ENCODE measurements at regions of chr6 and their contacts with region 1.

Region 1: DNA sequence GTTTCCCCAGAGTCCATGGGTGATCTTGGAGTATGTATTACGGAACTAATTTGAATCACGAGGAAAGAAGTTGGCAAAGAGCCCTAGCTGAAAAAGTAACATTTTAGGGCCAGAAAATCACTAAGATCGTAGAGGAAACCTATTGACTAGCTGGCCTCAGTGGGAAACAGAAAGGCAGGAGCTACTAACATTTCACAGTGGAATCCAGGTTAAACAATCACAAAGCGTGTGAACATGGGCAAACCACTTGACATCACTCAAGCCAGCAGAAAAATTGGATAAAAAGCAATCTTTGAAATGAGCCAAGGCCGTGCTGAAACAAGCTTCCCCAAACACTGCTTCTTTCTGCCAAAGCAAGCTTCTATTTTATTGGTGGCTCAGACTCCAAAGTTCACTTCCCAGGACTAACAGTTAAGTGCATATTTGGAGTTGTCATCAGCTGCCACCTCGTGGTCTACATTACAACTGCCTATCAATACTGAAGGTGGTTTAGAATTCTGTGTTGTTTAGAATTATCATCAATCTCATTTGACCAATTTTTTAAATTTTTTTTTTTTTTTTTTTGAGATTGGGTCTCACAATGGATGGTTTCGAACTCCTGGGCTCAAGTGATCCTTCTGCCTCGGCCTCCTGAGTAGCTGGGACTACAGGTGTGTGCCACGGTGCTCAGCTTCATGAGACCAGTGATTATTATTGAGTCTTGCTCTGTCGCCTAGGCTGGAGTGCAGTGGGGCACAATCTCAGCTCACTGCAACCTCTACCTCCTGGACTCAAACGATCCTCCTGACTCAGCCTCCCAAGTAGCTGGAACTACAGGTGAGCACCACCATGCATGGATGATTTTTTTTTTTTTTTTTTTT is 10.6 kb downstream of the RPS10 start:
- DNase-seq: peak; percentile 66
- ATAC-seq: peak; percentile 67
- H3K4me3 Mint-ChIP-seq: no peak overlapping the region
- H3K27ac Mint-ChIP-seq: no peak overlapping the region
- H3K4me1 Mint-ChIP-seq: peaks cover 8% of the 10 kb centered on the region
- H3K27me3 Mint-ChIP-seq: no peaks in the 10 kb centered on the region

Region 2: DNA sequence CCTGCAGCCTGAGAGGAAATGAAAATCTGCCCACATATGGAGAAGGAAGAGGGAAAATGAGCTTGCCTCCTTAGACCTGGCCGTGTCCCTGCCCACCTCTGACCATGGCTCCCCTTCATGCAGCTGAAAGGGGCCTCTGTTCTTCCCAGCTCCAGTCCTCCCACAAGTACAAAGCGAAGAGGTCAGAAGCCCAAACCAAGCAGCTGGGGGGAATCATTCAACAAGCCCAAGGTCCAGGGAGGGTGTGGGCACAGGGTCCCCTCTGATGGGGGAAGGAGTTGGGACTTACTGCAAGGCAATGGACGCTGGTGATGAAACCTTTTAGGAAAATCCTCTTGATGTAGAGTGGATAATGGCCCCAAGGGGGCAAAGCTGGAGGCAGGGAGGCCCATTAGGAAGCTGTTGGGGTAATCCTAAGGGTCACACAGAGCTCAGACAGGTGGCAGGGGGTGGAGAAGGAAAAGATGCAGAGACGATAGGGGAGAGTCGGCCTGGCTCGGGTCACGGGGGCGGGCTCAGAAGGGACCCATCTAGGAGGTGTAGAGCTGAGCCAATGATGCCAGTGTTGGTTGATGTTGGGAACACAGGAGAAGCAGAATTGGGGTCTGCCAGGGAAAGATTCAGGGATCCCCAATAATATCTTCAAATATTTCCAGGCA is 253.2 kb before region 1 on chr6:
- CTCF ChIA-PET with region 1: interaction called, 27 read pairs
- POLR2A ChIA-PET with region 1: interaction called, 3 read pairs
- DNase-seq: no peak
- ATAC-seq: no peak
- H3K4me3 Mint-ChIP-seq: no peak overlapping the region
- H3K27ac Mint-ChIP-seq: no peak overlapping the region
- H3K4me1 Mint-ChIP-seq: no peaks in the 10 kb centered on the region
- H3K27me3 Mint-ChIP-seq: peaks cover 24% of the 10 kb centered on the region

Region 3: DNA sequence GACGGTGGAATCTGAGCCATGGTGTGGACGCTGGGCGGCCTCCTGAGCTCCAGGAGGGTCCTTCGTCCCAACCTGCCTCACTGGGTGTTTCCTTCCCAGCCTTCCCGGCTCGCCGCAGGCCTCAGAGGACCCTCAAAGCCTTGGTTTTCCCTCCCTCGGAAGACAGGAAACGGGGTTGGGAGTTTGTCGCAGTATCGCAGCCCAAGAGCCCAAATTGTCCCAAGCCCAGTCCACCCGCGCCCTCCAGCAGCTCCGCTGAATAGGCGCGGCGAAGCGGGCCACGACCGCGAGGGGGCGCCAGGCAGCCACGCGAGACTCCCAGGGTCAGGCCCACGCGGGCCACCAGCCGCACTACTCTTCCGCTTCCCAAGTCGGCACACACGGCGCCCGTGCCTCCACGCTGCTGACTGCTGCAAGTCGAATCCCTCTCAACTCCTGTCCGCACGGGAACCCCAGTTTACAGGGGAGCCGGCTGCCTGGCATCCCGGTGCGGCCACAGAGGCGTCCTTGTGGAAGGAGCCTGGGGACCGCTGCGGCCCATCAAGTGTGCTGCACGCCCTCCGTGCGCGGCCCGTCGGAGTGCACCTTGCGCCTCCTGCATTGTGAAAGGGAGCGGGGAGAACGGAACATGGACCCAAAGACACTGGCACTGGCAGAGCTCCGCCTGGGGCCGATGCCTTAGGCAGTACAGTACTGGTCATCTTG is 219.0 kb before region 1 on chr6:
- CTCF ChIA-PET with region 1: interaction called, 51 read pairs
- POLR2A ChIA-PET with region 1: interaction called, 8 read pairs
- DNase-seq: peak; percentile 89
- ATAC-seq: peak; percentile 99
- H3K4me3 Mint-ChIP-seq: peak overlapping the region; percentile 75
- H3K27ac Mint-ChIP-seq: peak overlapping the region; percentile 39
- H3K4me1 Mint-ChIP-seq: peaks cover 7% of the 10 kb centered on the region
- H3K27me3 Mint-ChIP-seq: peaks cover 13% of the 10 kb centered on the region

Region 4: DNA sequence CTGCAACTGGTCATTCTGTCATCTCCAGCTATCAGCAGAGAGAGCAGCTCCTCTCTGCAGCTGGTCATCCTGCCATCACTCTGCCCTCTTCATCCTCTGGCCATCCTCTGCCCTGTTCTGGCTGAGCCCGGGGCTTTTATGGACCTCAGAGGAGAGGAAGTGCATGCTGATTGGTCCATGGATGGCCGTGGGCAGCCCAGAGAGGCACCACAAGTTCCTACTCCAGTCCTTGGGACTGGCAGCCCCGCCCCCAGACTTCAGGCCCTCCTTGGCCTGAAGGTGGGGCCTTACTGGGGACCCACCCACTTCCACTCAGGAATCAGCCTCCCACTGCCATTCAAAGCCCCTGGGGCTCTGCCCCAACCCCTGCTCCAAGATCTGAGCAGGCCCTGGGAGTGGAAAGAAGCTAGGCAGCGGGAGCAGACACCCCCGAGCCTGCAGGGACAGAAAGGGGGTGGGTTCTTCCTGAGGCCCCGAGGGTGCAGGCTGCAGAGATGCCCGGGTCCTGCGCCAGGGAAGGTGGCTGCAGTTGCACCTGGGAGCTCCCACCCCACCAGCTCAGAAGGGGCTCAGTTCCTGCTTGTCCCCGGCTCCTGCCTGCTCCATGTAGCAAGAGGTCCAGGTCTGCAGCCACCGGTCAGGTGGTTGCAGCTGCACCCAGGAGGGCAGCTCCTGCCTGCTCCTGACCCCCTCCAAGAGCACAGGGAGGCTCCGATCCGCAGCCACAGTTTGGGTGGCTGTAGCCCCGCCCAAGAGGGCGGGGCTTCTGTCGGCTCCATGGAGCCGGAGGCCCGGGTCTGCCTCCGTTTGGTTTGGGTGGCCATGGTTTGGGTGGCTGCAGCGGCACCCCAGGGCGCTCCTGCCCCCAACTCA is 212.7 kb before region 1 on chr6:
- CTCF ChIA-PET with region 1: interaction called, 12 read pairs
- POLR2A ChIA-PET with region 1: no interaction called
- DNase-seq: no peak
- ATAC-seq: no peak
- H3K4me3 Mint-ChIP-seq: no peak overlapping the region
- H3K27ac Mint-ChIP-seq: no peak overlapping the region
- H3K4me1 Mint-ChIP-seq: peaks cover 18% of the 10 kb centered on the region
- H3K27me3 Mint-ChIP-seq: peaks cover 7% of the 10 kb centered on the region

Region 5: GRCh38 chr6:34281702-34282334 is 133.4 kb before region 1 on chr6:
- CTCF ChIA-PET with region 1: no interaction called
- POLR2A ChIA-PET with region 1: no interaction called
- DNase-seq: no peak
- ATAC-seq: no peak
- H3K4me3 Mint-ChIP-seq: no peak overlapping the region
- H3K27ac Mint-ChIP-seq: no peak overlapping the region
- H3K4me1 Mint-ChIP-seq: peaks cover 11% of the 10 kb centered on the region
- H3K27me3 Mint-ChIP-seq: no peaks in the 10 kb centered on the region

Region 6: GRCh38 chr6:34392497-34393190 is 22.6 kb before region 1 on chr6 and contains the start of gene NUDT3:
- CTCF ChIA-PET with region 1: interaction called, 23 read pairs
- POLR2A ChIA-PET with region 1: interaction called, 3 read pairs
- DNase-seq: peak; percentile 96
- ATAC-seq: peak; percentile 96
- H3K4me3 Mint-ChIP-seq: peak within 1 kb of the TSS; percentile 58
- H3K27ac Mint-ChIP-seq: peak within 1 kb of the TSS; percentile 89
- H3K4me1 Mint-ChIP-seq: peaks cover 12% of the 10 kb centered on the region
- H3K27me3 Mint-ChIP-seq: no peaks in the 10 kb centered on the region
- total RNA-seq, gene NUDT3: 13.1 to 13.8 TPM

Region 7: DNA sequence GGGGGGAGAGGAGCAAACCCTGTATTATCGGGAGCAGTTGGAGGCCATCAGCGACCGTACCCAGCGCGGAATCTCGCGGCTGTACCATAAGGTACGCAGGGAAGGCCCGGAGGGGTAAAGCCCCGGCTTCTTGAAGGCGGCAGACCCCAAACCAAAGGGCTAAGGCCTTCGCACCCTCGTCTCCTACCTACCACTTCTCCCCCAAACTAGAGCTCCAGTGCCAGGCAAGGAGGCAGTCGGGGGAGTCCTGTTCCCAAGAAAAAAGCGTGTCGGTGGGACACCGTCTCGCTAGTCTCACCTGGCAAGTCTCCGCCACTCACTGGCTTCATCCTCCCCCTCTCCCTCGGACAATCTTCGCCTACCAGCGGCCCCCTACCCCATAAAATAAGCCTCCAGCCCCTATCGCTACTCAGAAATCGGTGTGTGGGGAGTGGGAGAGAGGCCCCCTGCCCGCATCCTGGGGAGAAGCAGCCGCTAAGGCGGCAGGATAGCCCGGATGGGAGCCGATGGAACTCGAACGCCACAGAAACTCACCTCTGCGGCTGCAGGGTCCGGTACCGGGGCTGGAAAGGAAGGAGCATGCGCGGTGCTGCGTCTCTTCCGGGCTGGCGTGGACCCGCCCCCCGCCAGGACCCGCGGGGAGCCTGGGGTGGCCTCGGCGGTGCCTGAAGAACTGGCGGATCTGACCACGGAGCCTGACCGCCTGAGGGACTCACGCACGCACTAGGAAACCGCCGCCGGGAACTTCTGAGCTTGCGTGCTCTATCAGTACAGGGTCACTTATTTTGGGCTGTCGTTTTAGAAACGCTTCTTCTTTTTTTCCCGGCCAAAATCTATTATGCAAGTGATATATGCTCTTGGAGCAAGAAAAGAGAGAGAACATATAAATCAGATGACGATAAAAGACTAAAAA is 10.5 kb after region 1 on chr6 and contains the start of gene RPS10:
- CTCF ChIA-PET with region 1: interaction called, 26 read pairs
- POLR2A ChIA-PET with region 1: interaction called, 16 read pairs
- DNase-seq: peak; percentile 91
- ATAC-seq: peak; percentile 95
- H3K4me3 Mint-ChIP-seq: peak within 1 kb of the TSS; percentile 99
- H3K27ac Mint-ChIP-seq: peak within 1 kb of the TSS; percentile 98
- H3K4me1 Mint-ChIP-seq: peaks cover 35% of the 10 kb centered on the region
- H3K27me3 Mint-ChIP-seq: peaks cover 8% of the 10 kb centered on the region
- total RNA-seq, gene RPS10: 1,272 to 1,289 TPM

Region 8: GRCh38 chr6:34610819-34611477 is 195.7 kb after region 1 on chr6:
- CTCF ChIA-PET with region 1: interaction called, 10 read pairs
- POLR2A ChIA-PET with region 1: no interaction called
- DNase-seq: no peak
- ATAC-seq: no peak
- H3K4me3 Mint-ChIP-seq: no peak overlapping the region
- H3K27ac Mint-ChIP-seq: no peak overlapping the region
- H3K4me1 Mint-ChIP-seq: peaks cover 14% of the 10 kb centered on the region
- H3K27me3 Mint-ChIP-seq: no peaks in the 10 kb centered on the region

Region 9: GRCh38 chr6:34671801-34672656 is 256.8 kb after region 1 on chr6:
- CTCF ChIA-PET with region 1: no interaction called
- POLR2A ChIA-PET with region 1: no interaction called
- DNase-seq: peak; percentile 87
- ATAC-seq: peak; percentile 99
- H3K4me3 Mint-ChIP-seq: peak overlapping the region; percentile 65
- H3K27ac Mint-ChIP-seq: peak overlapping the region; percentile 96
- H3K4me1 Mint-ChIP-seq: peaks cover 47% of the 10 kb centered on the region
- H3K27me3 Mint-ChIP-seq: no peaks in the 10 kb centered on the region

Region 10: DNA sequence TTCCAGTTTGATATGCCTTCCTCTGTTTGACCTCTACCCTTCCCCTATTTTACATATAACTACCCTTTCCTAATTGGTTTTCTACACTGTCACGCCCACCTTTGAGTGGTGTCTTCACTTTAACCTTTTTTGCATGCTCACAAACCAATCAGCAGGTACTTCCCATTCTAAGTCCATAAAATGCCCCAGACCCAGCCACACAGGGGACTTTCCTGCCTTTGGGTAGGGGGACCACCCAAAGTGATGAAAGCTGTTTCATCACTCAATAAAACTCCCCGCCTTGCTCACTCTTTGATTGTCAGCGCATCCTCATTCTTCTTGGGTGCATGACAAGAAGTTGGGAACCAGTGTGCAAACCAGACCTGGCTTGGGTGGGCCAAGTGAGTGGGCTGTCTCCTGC is 321.6 kb after region 1 on chr6:
- CTCF ChIA-PET with region 1: no interaction called
- POLR2A ChIA-PET with region 1: no interaction called
- DNase-seq: no peak
- ATAC-seq: no peak
- H3K4me3 Mint-ChIP-seq: no peak overlapping the region
- H3K27ac Mint-ChIP-seq: no peak overlapping the region
- H3K4me1 Mint-ChIP-seq: no peaks in the 10 kb centered on the region
- H3K27me3 Mint-ChIP-seq: no peaks in the 10 kb centered on the region

Measured in activated CD8-positive, alpha-beta T cell treated with anti-CD3 and anti-CD28 coated beads, Interleukin-2, amount 10 ng/mL, durations not matched to agents 7 days and 5 days (primary cell).